ENCODE measurements at regions of chr18 and their contacts with region 1.

Region 1: DNA sequence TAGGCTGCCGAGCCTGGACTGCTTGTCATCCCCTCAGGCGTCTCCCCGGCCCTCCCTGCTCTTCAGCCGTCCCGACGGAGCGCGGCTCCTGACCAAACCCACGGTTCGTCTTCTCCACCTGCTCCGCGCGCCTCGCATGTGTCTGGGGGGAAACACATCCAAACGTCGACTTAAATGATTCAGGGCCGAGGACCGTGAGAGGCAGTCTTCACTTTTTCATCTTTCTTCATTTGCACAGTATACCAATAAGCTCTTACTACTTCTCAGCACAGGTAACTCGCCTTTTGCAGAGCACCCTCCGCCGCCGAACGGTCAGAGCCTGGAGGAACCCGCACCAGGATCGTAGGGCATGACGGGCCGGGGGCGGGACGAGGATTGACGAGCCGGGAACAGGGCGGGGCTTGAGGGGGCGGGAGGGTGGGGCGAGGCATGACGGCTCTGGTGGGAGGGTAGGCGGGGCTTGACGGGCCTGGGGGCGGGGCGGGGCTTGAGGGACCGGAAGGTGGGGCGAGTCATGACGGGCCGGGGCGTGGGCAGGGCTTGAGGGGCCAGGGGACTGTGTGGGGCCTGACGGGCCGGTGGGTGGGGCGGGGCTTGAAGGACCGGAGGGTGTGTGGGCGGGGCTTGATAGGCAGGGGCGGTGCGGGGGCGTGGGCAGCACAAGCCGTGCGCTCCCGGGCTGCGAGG is at the start of gene SEH1L:
- DNase-seq: peak; percentile 99
- H3K4me3 ChIP-seq: peak within 1 kb of the TSS; percentile 84
- H3K4me3 Mint-ChIP-seq: peak within 1 kb of the TSS; percentile 100
- H3K27ac Mint-ChIP-seq: peak within 1 kb of the TSS; percentile 100
- H3K4me1 ChIP-seq: peaks cover 19% of the 10 kb centered on the region
- H3K4me1 Mint-ChIP-seq: peaks cover 11% of the 10 kb centered on the region
- H3K27me3 ChIP-seq: no peaks in the 10 kb centered on the region
- H3K27me3 Mint-ChIP-seq: no peaks in the 10 kb centered on the region
- CTCF ChIP-seq: no peak
- total RNA-seq, gene SEH1L: 116 and 118 TPM in 2 replicates

Region 2: GRCh38 chr18:12768625-12769024 is 178.9 kb before region 1 on chr18:
- CTCF ChIA-PET with region 1: no interaction called
- POLR2A ChIA-PET with region 1: no interaction called
- intact Hi-C with region 1: loop called (anchors 5 kb)
- DNase-seq: no peak
- H3K4me3 ChIP-seq: no peak overlapping the region
- H3K4me3 Mint-ChIP-seq: no peak overlapping the region
- H3K27ac Mint-ChIP-seq: no peak overlapping the region
- H3K4me1 ChIP-seq: peaks cover 23% of the 10 kb centered on the region
- H3K4me1 Mint-ChIP-seq: peaks cover 9% of the 10 kb centered on the region
- H3K27me3 ChIP-seq: no peaks in the 10 kb centered on the region
- H3K27me3 Mint-ChIP-seq: no peaks in the 10 kb centered on the region
- CTCF ChIP-seq: no peak